Activated B cell treated with CpG ODN at 0.5 μM for 24 hours (primary cell): ENCODE measurements at regions of chr11 and their contacts with region 1.

Region 1: GRCh38 chr11:16902781-16903378 is 111.3 kb downstream of the PLEKHA7 start:
- DNase-seq: no peak
- ATAC-seq: peak; percentile 64
- H3K4me3 Mint-ChIP-seq: peak overlapping the region; percentile 74
- H3K27ac Mint-ChIP-seq: peak overlapping the region; percentile 92
- H3K4me1 Mint-ChIP-seq: peaks cover 33% of the 10 kb centered on the region
- H3K27me3 Mint-ChIP-seq: no peaks in the 10 kb centered on the region
- CTCF ChIP-seq: no peak

Region 2: GRCh38 chr11:16881074-16881709 is 21.7 kb before region 1 on chr11:
- CTCF ChIA-PET with region 1: no interaction called
- POLR2A ChIA-PET with region 1: no interaction called
- intact Hi-C with region 1: no loop called
- DNase-seq: no peak
- ATAC-seq: no peak
- H3K4me3 Mint-ChIP-seq: no peak overlapping the region
- H3K27ac Mint-ChIP-seq: no peak overlapping the region
- H3K4me1 Mint-ChIP-seq: no peaks in the 10 kb centered on the region
- H3K27me3 Mint-ChIP-seq: peaks cover 5% of the 10 kb centered on the region
- CTCF ChIP-seq: no peak

Region 3: GRCh38 chr11:16924826-16925560 is 22.1 kb after region 1 on chr11:
- CTCF ChIA-PET with region 1: no interaction called
- POLR2A ChIA-PET with region 1: interaction called, 7 read pairs
- intact Hi-C with region 1: loop called (anchors 1 kb)
- DNase-seq: no peak
- ATAC-seq: peak; percentile 16
- H3K4me3 Mint-ChIP-seq: peak overlapping the region; percentile 82
- H3K27ac Mint-ChIP-seq: peak overlapping the region; percentile 62
- H3K4me1 Mint-ChIP-seq: peaks cover 28% of the 10 kb centered on the region
- H3K27me3 Mint-ChIP-seq: peaks cover 18% of the 10 kb centered on the region
- CTCF ChIP-seq: no peak

Region 4: DNA sequence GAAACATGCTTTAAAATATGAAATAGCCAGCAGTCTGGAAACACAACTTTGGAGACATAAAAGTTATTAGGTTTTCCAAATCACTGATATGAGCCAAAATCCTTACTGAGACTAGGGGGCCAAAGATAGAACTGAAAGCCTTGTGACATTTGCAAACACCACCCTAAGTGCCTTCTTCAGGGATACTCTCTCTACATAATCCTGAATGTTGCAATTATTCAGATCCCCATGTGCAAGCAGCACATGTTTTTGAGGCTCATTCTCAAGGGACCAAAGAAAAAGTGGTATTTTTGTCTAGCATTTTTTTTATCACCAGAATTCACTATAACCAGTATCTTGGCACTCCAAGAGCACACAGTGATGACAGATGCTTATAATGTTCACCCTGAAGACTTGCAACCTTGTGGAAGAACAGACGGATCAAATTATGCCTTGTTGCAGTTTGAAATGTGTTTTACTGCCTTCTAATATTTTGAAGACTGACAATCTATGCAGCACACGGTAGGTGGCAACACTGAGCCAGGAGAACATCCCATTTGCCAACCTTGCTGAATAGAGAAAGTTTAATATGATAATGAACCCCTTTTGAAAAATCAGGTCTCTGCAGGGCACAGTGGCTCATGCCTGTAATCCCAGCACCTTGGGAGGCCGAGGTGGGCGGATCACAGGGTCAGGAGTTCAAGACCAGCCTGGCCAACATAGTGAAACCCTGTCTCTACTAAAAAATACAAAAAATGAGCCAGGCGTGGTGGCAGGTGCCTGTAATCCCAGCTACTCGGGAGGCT is 32.8 kb after region 1 on chr11:
- CTCF ChIA-PET with region 1: no interaction called
- POLR2A ChIA-PET with region 1: no interaction called
- intact Hi-C with region 1: no loop called
- DNase-seq: no peak
- ATAC-seq: no peak
- H3K4me3 Mint-ChIP-seq: no peak overlapping the region
- H3K27ac Mint-ChIP-seq: no peak overlapping the region
- H3K4me1 Mint-ChIP-seq: peaks cover 1% of the 10 kb centered on the region
- H3K27me3 Mint-ChIP-seq: no peaks in the 10 kb centered on the region
- CTCF ChIP-seq: no peak

Region 5: DNA sequence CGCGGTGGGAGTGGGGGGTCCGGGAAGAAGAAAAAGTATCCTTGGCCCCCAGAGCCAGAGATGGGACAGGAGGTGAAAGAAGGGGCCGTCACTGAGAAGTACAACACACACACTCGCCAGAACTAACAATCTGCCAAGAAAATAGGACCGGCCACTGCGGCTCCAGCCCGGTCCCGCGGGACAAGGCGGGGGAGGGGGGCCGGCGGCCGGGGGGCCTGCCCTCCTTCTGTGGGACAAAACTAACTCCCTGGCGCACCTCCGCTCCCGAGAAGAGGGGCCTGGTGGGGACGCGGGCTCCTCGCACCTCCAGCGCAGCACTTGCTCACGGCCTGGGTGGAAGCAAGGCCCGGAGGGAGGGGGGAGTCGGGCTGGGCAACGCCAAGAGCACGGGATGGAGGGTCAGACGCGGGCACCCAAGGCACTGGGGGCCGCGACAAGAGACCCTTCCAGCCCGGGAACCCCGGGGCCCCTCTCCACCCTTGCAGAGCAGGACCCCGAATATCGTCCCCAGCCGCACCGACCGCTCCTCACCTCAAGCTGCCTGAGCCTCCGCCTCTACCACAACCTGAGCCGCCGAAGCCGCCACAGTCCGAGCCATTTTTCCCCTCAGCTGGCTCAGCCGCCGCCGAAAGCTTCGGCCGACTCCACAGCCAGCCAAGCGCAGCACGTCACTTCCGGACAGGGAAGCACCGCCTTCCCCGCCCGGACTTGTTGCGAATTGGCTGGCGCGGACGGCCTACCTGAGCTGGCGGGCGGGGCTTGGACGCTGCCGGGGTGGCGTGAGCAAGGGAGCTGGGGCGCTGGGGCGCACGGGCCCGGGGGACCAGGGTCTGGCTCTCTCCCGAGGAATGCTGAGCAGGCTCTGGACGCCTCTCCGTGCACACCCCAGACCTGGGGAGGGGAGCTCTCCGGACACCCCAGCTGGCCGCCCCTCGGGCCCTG is 304.7 kb after region 1 on chr11 and contains the start of gene PIK3C2A:
- CTCF ChIA-PET with region 1: no interaction called
- POLR2A ChIA-PET with region 1: no interaction called
- intact Hi-C with region 1: loop called (anchors 2 kb)
- DNase-seq: peak; percentile 91
- ATAC-seq: peak; percentile 95
- H3K4me3 Mint-ChIP-seq: peak within 1 kb of the TSS; percentile 99
- H3K27ac Mint-ChIP-seq: peak within 1 kb of the TSS; percentile 99
- H3K4me1 Mint-ChIP-seq: peaks cover 40% of the 10 kb centered on the region
- H3K27me3 Mint-ChIP-seq: no peaks in the 10 kb centered on the region
- CTCF ChIP-seq: no peak
- total RNA-seq, gene PIK3C2A: 35.9 and 41.2 TPM in 2 replicates